ENCODE measurements at regions of chr3 and their contacts with region 1.

Region 1: GRCh38 chr3:157436583-157437291 is at the start of gene PTX3:
- DNase-seq: peak; percentile 83
- H3K4me3 Mint-ChIP-seq: peak within 1 kb of the TSS; percentile 70
- H3K27ac Mint-ChIP-seq: no peak within 1 kb of the TSS
- H3K4me1 Mint-ChIP-seq: peaks cover 6% of the 10 kb centered on the region
- H3K27me3 Mint-ChIP-seq: no peaks in the 10 kb centered on the region
- CTCF ChIP-seq: no peak
- total RNA-seq, gene PTX3: 159 and 217 TPM in 2 replicates

Region 2: DNA sequence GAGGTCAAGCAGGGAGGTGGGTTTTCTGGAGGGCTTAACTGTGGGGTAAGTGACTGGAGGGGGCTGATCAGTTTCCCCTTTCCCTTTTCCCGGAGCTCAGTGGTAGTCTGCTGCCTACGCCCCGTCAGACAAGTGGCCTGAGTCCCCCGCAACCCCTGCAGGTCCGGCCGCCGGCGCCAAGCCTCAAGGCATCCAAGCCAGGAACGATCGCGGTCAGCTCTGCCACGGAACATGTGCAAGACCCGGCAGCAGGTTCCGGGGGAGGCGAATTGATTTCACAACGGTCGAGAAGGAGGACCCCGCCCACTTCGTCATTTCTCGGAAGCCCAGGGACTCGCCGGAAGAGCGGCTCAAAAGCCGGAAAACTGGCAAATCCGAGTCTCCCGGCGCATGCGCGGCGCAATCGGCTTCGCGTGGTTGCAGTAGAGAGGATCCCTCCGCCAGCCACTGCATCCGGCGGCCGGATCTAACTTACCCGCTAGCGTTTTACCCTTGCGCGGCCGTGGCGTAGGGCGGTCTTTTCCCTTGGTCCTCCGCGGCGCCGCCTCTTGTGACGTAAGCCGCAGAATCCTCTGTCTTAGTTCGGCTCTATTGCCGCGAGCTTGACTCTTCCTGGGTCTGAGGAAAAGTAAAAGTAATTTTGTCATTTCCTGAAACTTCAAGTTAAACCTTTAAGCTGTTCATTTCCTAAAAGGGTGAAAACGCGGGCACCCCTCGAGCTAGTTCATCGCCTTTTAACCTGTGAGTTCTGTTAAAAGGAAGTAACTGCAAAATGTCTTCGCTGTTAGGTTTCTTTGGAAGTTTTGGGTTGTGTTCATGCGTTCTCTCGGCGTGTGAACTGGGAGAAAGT is 261.9 kb before region 1 on chr3:
- CTCF ChIA-PET with region 1: interaction called, 3 read pairs
- POLR2A ChIA-PET with region 1: interaction called, 14 read pairs
- intact Hi-C with region 1: no loop called
- DNase-seq: peak; percentile 99
- H3K4me3 Mint-ChIP-seq: peak overlapping the region; percentile 83
- H3K27ac Mint-ChIP-seq: peak overlapping the region; percentile 98
- H3K4me1 Mint-ChIP-seq: peaks cover 6% of the 10 kb centered on the region
- H3K27me3 Mint-ChIP-seq: no peaks in the 10 kb centered on the region
- CTCF ChIP-seq: no peak

Region 3: GRCh38 chr3:157282261-157283191 is 154.2 kb before region 1 on chr3:
- CTCF ChIA-PET with region 1: no interaction called
- POLR2A ChIA-PET with region 1: no interaction called
- intact Hi-C with region 1: loop called (anchors 1 kb)
- DNase-seq: peak; percentile 34
- H3K4me3 Mint-ChIP-seq: no peak overlapping the region
- H3K27ac Mint-ChIP-seq: peak overlapping the region; percentile 20
- H3K4me1 Mint-ChIP-seq: peaks cover 15% of the 10 kb centered on the region
- H3K27me3 Mint-ChIP-seq: no peaks in the 10 kb centered on the region
- CTCF ChIP-seq: no peak

Region 4: GRCh38 chr3:157311633-157312375 is 124.9 kb before region 1 on chr3:
- CTCF ChIA-PET with region 1: no interaction called
- POLR2A ChIA-PET with region 1: no interaction called
- intact Hi-C with region 1: loop called (anchors 1 kb)
- DNase-seq: peak; percentile 83
- H3K4me3 Mint-ChIP-seq: no peak overlapping the region
- H3K27ac Mint-ChIP-seq: peak overlapping the region; percentile 75
- H3K4me1 Mint-ChIP-seq: peaks cover 8% of the 10 kb centered on the region
- H3K27me3 Mint-ChIP-seq: no peaks in the 10 kb centered on the region
- CTCF ChIP-seq: no peak

Region 5: GRCh38 chr3:157360044-157360443 is 76.7 kb before region 1 on chr3:
- CTCF ChIA-PET with region 1: interaction called, 3 read pairs
- POLR2A ChIA-PET with region 1: interaction called, 5 read pairs
- intact Hi-C with region 1: loop called (anchors 1 kb)
- DNase-seq: peak; percentile 74
- H3K4me3 Mint-ChIP-seq: no peak overlapping the region
- H3K27ac Mint-ChIP-seq: no peak overlapping the region
- H3K4me1 Mint-ChIP-seq: peaks cover 19% of the 10 kb centered on the region
- H3K27me3 Mint-ChIP-seq: no peaks in the 10 kb centered on the region
- CTCF ChIP-seq: no peak

Region 6: GRCh38 chr3:157379525-157380140 is 57.1 kb before region 1 on chr3:
- CTCF ChIA-PET with region 1: no interaction called
- POLR2A ChIA-PET with region 1: no interaction called
- intact Hi-C with region 1: no loop called
- DNase-seq: no peak
- H3K4me3 Mint-ChIP-seq: no peak overlapping the region
- H3K27ac Mint-ChIP-seq: no peak overlapping the region
- H3K4me1 Mint-ChIP-seq: no peaks in the 10 kb centered on the region
- H3K27me3 Mint-ChIP-seq: no peaks in the 10 kb centered on the region
- CTCF ChIP-seq: no peak

Region 7: GRCh38 chr3:157447026-157447694 is 10.4 kb after region 1 on chr3:
- CTCF ChIA-PET with region 1: interaction called, 16 read pairs
- POLR2A ChIA-PET with region 1: interaction called, 4 read pairs
- intact Hi-C with region 1: no loop called
- DNase-seq: peak; percentile 53
- H3K4me3 Mint-ChIP-seq: no peak overlapping the region
- H3K27ac Mint-ChIP-seq: no peak overlapping the region
- H3K4me1 Mint-ChIP-seq: peaks cover 17% of the 10 kb centered on the region
- H3K27me3 Mint-ChIP-seq: no peaks in the 10 kb centered on the region
- CTCF ChIP-seq: peak; percentile 65

Region 8: GRCh38 chr3:157493627-157494550 is 57.2 kb after region 1 on chr3:
- CTCF ChIA-PET with region 1: interaction called, 10 read pairs
- POLR2A ChIA-PET with region 1: no interaction called
- intact Hi-C with region 1: no loop called
- DNase-seq: peak; percentile 70
- H3K4me3 Mint-ChIP-seq: no peak overlapping the region
- H3K27ac Mint-ChIP-seq: no peak overlapping the region
- H3K4me1 Mint-ChIP-seq: peaks cover 13% of the 10 kb centered on the region
- H3K27me3 Mint-ChIP-seq: no peaks in the 10 kb centered on the region
- CTCF ChIP-seq: peak; percentile 59

Region 9: DNA sequence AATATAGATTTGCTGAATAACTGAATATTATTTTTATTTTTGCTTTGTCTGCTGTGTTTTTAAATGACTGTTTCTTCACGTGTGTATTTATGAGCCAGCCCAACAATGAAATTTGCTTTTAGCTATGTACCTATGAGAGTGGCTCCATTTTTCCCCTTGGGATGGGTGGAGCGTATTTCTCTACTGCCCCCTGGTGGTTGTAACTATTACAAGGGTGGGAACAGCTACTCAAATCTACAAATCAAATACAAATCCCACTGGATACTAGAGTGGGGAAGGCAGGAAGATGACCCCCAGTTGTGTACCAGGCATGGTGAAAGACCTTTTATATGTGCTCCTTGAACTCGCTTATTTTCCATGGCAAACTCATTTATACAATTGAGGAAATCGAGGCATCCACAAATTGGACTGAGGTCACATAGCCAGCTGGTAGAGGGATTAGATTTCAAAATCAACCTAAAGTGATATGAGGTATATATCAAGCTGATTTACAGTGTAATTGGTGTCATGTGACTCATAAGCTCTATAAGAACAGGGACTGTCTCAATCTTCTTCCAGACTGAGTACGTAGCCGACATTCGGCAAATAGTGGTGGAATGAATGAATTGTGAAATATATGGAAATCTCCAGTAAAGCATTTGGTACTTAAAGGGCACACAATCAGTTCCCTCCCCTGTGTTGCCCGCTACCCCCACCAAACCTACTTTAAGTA is 136.0 kb after region 1 on chr3:
- CTCF ChIA-PET with region 1: no interaction called
- POLR2A ChIA-PET with region 1: no interaction called
- intact Hi-C with region 1: no loop called
- DNase-seq: peak; percentile 72
- H3K4me3 Mint-ChIP-seq: no peak overlapping the region
- H3K27ac Mint-ChIP-seq: no peak overlapping the region
- H3K4me1 Mint-ChIP-seq: peaks cover 11% of the 10 kb centered on the region
- H3K27me3 Mint-ChIP-seq: no peaks in the 10 kb centered on the region
- CTCF ChIP-seq: peak; percentile 63

Region 10: GRCh38 chr3:157906627-157907026 is 469.9 kb after region 1 on chr3:
- CTCF ChIA-PET with region 1: no interaction called
- POLR2A ChIA-PET with region 1: no interaction called
- intact Hi-C with region 1: no loop called
- DNase-seq: peak; percentile 33
- H3K4me3 Mint-ChIP-seq: no peak overlapping the region
- H3K27ac Mint-ChIP-seq: no peak overlapping the region
- H3K4me1 Mint-ChIP-seq: no peaks in the 10 kb centered on the region
- H3K27me3 Mint-ChIP-seq: no peaks in the 10 kb centered on the region
- CTCF ChIP-seq: no peak

Measured in MCF 10A (cell line).